Esophagus muscularis mucosa (tissue), 4 donors: ENCODE measurements at regions of chr2 and their contacts with region 1.

Region 1: GRCh38 chr2:121634354-121635307 is 14.6 kb downstream of the CLASP1 start:
- DNase-seq: no peak
- H3K4me3 ChIP-seq: no peak overlapping the region
- H3K27ac ChIP-seq: peak overlapping the region; percentile 14 to 41 (median 27)
- H3K4me1 ChIP-seq: peaks cover 34 to 55% (median 40%) of the 10 kb centered on the region in 4 donors
- H3K27me3 ChIP-seq: no peaks in the 10 kb centered on the region
- CTCF ChIP-seq: no peak
- EP300 ChIP-seq: no peak
- POLR2A ChIP-seq: no peak

Region 2: GRCh38 chr2:121644715-121645114 is 10.1 kb after region 1 on chr2:
- intact Hi-C with region 1: loop called (anchors 2 kb)
- DNase-seq: no peak
- H3K4me3 ChIP-seq: no peak overlapping the region
- H3K27ac ChIP-seq: no peak overlapping the region
- H3K4me1 ChIP-seq: peaks cover 39 to 66% (median 54%) of the 10 kb centered on the region in 4 donors
- H3K27me3 ChIP-seq: no peaks in the 10 kb centered on the region
- CTCF ChIP-seq: no peak
- EP300 ChIP-seq: no peak
- POLR2A ChIP-seq: no peak